HCT116 (cell line): ENCODE measurements at regions of chr7 and their contacts with region 1.

Region 1: DNA sequence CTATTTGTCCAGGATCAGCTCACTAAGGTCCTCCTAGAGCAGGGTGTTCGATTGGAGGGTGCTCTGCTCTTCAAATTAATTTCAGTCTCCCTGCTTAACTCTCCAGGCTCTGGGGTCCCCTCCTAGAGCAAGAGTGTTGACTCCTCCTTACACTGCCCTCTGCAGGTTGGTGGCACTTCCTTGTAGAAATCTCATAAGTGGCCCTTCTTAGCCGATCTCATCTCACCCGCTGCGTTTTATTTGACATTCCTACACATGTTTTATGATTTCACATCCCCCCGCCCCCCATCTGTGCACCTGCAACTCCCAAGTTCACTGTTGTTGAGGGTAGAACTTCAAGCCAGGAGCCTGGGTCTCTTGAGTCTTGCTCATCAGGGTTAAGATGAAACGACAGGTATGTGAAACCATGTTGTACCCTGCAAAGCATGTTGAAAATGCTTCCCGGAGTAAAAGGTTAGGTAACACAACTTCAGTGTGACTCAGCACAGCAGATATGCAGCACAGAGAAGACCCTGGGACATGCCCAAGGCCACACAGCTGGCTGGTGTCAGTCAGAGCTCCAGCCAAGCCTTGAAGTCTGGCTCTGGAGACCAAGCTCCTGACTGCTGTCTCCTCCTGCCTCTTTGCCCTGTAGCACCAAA is 171.2 kb downstream of the PRKAG2 start:
- DNase-seq: peak; percentile 56
- ATAC-seq: peak; percentile 96
- H3K4me3 ChIP-seq: peak overlapping the region; percentile 25 to 33
- H3K27ac ChIP-seq: no peak overlapping the region
- H3K4me1 ChIP-seq: peaks cover 5 to 17% of the 10 kb centered on the region in 2 experiments; a peak in 3 of 4 replicates
- H3K27me3 ChIP-seq: no peaks in the 10 kb centered on the region
- CTCF ChIP-seq: peak; percentile 76 to 85 (median 82)
- POLR2A ChIP-seq: no peak
- RAD21 ChIP-seq: peak; percentile 79

Region 2: DNA sequence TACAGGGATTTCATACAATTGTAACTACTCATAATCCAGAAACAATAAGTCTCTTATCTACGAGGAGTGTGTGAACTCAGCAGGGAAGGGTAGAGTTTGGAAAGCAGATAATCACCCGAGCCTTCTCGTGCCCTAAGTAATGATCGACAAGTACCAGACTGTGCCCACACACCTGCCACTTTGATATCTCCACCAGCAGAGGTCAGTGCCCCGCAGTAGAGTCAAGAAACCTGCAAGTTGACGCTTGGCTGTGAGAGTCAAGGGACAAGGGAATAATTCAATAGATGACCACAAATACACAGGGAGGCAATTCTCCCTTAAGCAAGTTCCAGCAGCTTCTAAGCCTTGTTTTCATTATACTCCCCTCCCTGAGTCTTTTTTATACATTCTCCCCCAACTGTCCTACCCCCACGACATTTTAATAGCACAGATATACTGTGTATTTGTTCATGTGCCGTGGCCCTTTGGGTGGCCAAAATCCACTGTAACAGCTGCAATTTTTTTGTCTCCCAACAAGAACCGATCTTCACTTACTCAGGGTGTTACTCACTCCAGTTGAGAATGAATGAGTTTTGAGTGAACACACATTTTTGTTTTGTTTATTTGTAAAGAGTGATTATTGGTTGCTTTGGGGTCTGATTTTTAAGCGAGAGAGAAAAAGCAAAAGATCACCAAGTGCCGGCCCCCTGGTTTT is 79.2 kb before region 1 on chr7:
- CTCF ChIA-PET with region 1: no interaction called
- POLR2A ChIA-PET with region 1: no interaction called
- RAD21 ChIA-PET with region 1: no interaction called
- intact Hi-C with region 1: loop called (anchors 1 kb)
- DNase-seq: no peak
- ATAC-seq: peak; percentile 92
- H3K4me3 ChIP-seq: no peak overlapping the region
- H3K27ac ChIP-seq: no peak overlapping the region
- H3K4me1 ChIP-seq: peaks cover 6 to 14% of the 10 kb centered on the region in 2 experiments
- H3K27me3 ChIP-seq: no peaks in the 10 kb centered on the region
- CTCF ChIP-seq: peak; percentile 72 to 89 (median 78)
- POLR2A ChIP-seq: no peak
- RAD21 ChIP-seq: peak; percentile 89

Region 3: DNA sequence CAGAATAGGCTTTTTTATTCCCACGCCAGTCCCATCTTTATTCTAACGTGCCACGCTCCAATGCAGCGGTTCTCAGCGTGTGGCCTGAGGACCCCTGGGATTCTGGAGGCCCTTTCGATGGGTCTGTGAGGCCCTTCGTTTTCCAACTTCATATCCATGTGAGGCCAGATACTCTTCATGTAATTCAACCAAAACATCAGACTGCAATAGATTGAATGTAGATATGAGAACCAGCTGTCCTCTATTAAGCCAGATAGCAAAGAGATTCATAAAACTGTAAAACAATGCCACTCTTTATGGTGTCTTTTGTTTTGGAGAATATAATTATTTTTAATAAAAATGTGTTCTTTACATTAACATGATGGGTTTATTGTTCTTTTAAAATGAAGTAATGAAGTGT is 783.3 kb after region 1 on chr7:
- CTCF ChIA-PET with region 1: no interaction called
- POLR2A ChIA-PET with region 1: no interaction called
- RAD21 ChIA-PET with region 1: no interaction called
- intact Hi-C with region 1: no loop called
- DNase-seq: no peak
- ATAC-seq: no peak
- H3K4me3 ChIP-seq: no peak overlapping the region
- H3K27ac ChIP-seq: no peak overlapping the region
- H3K4me1 ChIP-seq: no peaks in the 10 kb centered on the region
- H3K27me3 ChIP-seq: no peaks in the 10 kb centered on the region
- CTCF ChIP-seq: no peak
- POLR2A ChIP-seq: no peak
- RAD21 ChIP-seq: no peak